Cardiac septum (tissue), 1 donor: ENCODE measurements at regions of chr5 and their contacts with region 1.

Region 1: GRCh38 chr5:82364497-82364896 is 86.3 kb upstream of the RPS23 start:
- DNase-seq: no peak

Region 2: GRCh38 chr5:82466986-82467561 is 102.6 kb after region 1 on chr5:
- intact Hi-C with region 1: loop called (anchors 10 kb)
- DNase-seq: no peak

Region 3: GRCh38 chr5:82551840-82552385 is 187.4 kb after region 1 on chr5:
- intact Hi-C with region 1: loop called (anchors 10 kb)
- DNase-seq: no peak

Region 4: GRCh38 chr5:82620957-82621600 is 256.6 kb after region 1 on chr5:
- intact Hi-C with region 1: no loop called
- DNase-seq: no peak